Activated B cell treated with CpG ODN at 0.5 μM for 24 hours (primary cell): ENCODE measurements at regions of chr17 and their contacts with region 1.

Region 1: GRCh38 chr17:42744806-42745617 is at the start of gene EZH1:
- DNase-seq: peak; percentile 96
- ATAC-seq: peak; percentile 87
- H3K4me3 Mint-ChIP-seq: peak within 1 kb of the TSS; percentile 96
- H3K27ac Mint-ChIP-seq: peak within 1 kb of the TSS; percentile 96
- H3K4me1 Mint-ChIP-seq: peaks cover 28% of the 10 kb centered on the region
- H3K27me3 Mint-ChIP-seq: peaks cover 11% of the 10 kb centered on the region
- CTCF ChIP-seq: no peak
- total RNA-seq, gene EZH1: 74.7 and 81.6 TPM in 2 replicates

Region 2: GRCh38 chr17:42472709-42473521 is 272.1 kb before region 1 on chr17:
- CTCF ChIA-PET with region 1: no interaction called
- POLR2A ChIA-PET with region 1: no interaction called
- intact Hi-C with region 1: no loop called
- DNase-seq: no peak
- ATAC-seq: no peak
- H3K4me3 Mint-ChIP-seq: no peak overlapping the region
- H3K27ac Mint-ChIP-seq: no peak overlapping the region
- H3K4me1 Mint-ChIP-seq: peaks cover 19% of the 10 kb centered on the region
- H3K27me3 Mint-ChIP-seq: no peaks in the 10 kb centered on the region
- CTCF ChIP-seq: no peak

Region 3: GRCh38 chr17:42698736-42699414 is 46.1 kb before region 1 on chr17:
- CTCF ChIA-PET with region 1: no interaction called
- POLR2A ChIA-PET with region 1: no interaction called
- intact Hi-C with region 1: no loop called
- DNase-seq: no peak
- ATAC-seq: no peak
- H3K4me3 Mint-ChIP-seq: no peak overlapping the region
- H3K27ac Mint-ChIP-seq: no peak overlapping the region
- H3K4me1 Mint-ChIP-seq: peaks cover 18% of the 10 kb centered on the region
- H3K27me3 Mint-ChIP-seq: no peaks in the 10 kb centered on the region
- CTCF ChIP-seq: no peak

Region 4: DNA sequence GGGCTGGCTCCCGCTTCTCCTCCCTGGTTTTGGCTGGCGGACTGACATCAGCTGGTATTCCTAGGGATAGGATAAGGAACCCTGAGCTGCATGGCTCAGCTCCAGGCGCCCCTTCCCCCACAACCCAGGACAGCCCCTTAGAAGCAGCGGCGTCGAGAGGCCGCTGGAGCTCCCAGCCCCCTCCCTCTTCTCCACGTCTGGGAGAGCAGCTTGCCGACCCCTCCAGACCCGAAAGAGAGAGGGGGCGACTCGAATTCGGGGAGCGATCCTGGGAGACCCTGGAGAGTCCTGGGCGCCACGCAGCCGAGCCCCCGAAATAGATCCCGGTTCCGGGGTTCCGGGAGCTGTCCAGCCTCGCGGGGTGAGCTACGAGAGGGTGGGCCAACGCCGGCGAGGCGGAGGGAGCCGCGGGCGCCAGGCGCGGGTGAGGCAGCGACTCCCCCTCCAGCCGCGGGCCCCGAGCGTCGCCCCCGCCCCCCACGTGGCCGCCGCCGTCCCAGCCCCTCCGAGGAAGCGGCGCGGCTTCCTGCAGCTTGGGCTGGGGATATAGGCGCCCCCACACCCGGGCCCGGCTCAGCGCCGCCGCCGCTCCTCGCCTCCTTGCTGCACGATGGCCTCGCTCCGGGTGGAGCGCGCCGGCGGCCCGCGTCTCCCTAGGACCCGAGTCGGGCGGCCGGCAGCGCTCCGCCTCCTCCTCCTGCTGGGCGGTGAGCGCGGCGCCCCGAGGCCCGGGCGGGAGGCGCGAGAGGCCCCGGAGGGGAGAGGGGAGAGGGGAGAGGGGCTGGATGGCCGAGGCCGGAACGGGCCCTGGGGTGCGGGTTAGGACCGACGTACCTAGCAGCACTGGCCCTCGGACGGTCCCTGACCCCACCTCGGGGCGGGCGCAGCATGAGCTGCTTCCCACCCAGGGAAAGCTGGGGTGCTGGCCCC is 15.9 kb after region 1 on chr17 and contains the start of gene RAMP2:
- CTCF ChIA-PET with region 1: interaction called, 4 read pairs
- POLR2A ChIA-PET with region 1: interaction called, 10 read pairs
- intact Hi-C with region 1: loop called (anchors 1 kb)
- DNase-seq: no peak
- ATAC-seq: peak; percentile 23
- H3K4me3 Mint-ChIP-seq: peak within 1 kb of the TSS; percentile 81
- H3K27ac Mint-ChIP-seq: peak within 1 kb of the TSS; percentile 61
- H3K4me1 Mint-ChIP-seq: peaks cover 12% of the 10 kb centered on the region
- H3K27me3 Mint-ChIP-seq: peaks cover 32% of the 10 kb centered on the region
- CTCF ChIP-seq: no peak
- total RNA-seq, gene RAMP2: not detected in 2 replicates

Region 5: GRCh38 chr17:42773290-42774035 is 28.5 kb after region 1 on chr17 and contains the start of gene VPS25:
- CTCF ChIA-PET with region 1: interaction called, 6 read pairs
- POLR2A ChIA-PET with region 1: interaction called, 12 read pairs
- intact Hi-C with region 1: loop called (anchors 1 kb)
- DNase-seq: peak; percentile 71
- ATAC-seq: peak; percentile 92
- H3K4me3 Mint-ChIP-seq: peak within 1 kb of the TSS; percentile 98
- H3K27ac Mint-ChIP-seq: peak within 1 kb of the TSS; percentile 96
- H3K4me1 Mint-ChIP-seq: peaks cover 35% of the 10 kb centered on the region
- H3K27me3 Mint-ChIP-seq: no peaks in the 10 kb centered on the region
- CTCF ChIP-seq: no peak
- total RNA-seq, gene VPS25: 49.7 and 49.8 TPM in 2 replicates

Region 6: GRCh38 chr17:42798383-42799380 is 53.7 kb after region 1 on chr17 and contains the starts of genes CNTD1 and COA3:
- CTCF ChIA-PET with region 1: no interaction called
- POLR2A ChIA-PET with region 1: interaction called, 3 read pairs
- intact Hi-C with region 1: loop called (anchors 1 kb)
- DNase-seq: peak; percentile 69
- ATAC-seq: peak; percentile 100
- H3K4me3 Mint-ChIP-seq: peak within 1 kb of the TSS; percentile 97
- H3K27ac Mint-ChIP-seq: peak within 1 kb of the TSS; percentile 81
- H3K4me1 Mint-ChIP-seq: peaks cover 28% of the 10 kb centered on the region
- H3K27me3 Mint-ChIP-seq: no peaks in the 10 kb centered on the region
- CTCF ChIP-seq: no peak
- total RNA-seq, gene CNTD1: not detected in 2 replicates
- total RNA-seq, gene COA3: 41.4 and 48.0 TPM in 2 replicates

Region 7: GRCh38 chr17:42980398-42981397 is 235.7 kb after region 1 on chr17 and contains the start of gene RUNDC1:
- CTCF ChIA-PET with region 1: no interaction called
- POLR2A ChIA-PET with region 1: no interaction called
- intact Hi-C with region 1: loop called (anchors 10 kb)
- DNase-seq: peak; percentile 94
- ATAC-seq: peak; percentile 76
- H3K4me3 Mint-ChIP-seq: peak within 1 kb of the TSS; percentile 99
- H3K27ac Mint-ChIP-seq: peak within 1 kb of the TSS; percentile 98
- H3K4me1 Mint-ChIP-seq: peaks cover 53% of the 10 kb centered on the region
- H3K27me3 Mint-ChIP-seq: no peaks in the 10 kb centered on the region
- CTCF ChIP-seq: no peak
- total RNA-seq, gene RUNDC1: 28.3 and 30.9 TPM in 2 replicates